Colonic mucosa (tissue), 4 donors: ENCODE measurements at regions of chr1 and their contacts with region 1.

Region 1: DNA sequence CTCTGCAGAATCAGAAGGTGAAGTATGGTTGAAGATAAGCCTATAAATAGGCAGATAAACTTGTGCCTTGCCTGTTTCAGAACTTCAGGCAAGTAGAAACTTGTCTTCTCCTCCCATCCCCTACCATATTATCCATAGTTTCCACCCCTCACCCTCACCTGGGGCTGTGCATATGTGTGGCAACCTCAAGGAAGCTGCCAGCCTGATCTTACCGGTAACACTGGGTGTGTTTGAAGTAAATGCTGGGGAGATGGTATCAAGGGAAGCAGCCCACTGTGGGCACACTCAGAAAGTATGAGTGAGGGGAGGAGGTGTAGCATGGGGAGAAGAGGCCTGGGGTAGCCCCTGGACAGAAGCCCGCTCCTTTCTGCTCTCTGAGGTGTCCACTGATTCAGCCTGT is 14.5 kb downstream of the VANGL2 start:
- DNase-seq: no peak
- H3K4me3 ChIP-seq: no peak overlapping the region
- H3K27ac ChIP-seq: no peak overlapping the region
- H3K4me1 ChIP-seq: no peaks in the 10 kb centered on the region
- H3K27me3 ChIP-seq: no peaks in the 10 kb centered on the region
- CTCF ChIP-seq: no peak

Region 2: GRCh38 chr1:160354388-160354985 is 60.4 kb before region 1 on chr1:
- intact Hi-C with region 1: loop called (anchors 2 kb)
- DNase-seq: no peak
- H3K4me3 ChIP-seq: no peak overlapping the region
- H3K27ac ChIP-seq: no peak overlapping the region
- H3K4me1 ChIP-seq: no peaks in the 10 kb centered on the region
- H3K27me3 ChIP-seq: no peaks in the 10 kb centered on the region
- CTCF ChIP-seq: peak; percentile 19